ENCODE measurements at regions of chr7 and their contacts with region 1.

Region 1: DNA sequence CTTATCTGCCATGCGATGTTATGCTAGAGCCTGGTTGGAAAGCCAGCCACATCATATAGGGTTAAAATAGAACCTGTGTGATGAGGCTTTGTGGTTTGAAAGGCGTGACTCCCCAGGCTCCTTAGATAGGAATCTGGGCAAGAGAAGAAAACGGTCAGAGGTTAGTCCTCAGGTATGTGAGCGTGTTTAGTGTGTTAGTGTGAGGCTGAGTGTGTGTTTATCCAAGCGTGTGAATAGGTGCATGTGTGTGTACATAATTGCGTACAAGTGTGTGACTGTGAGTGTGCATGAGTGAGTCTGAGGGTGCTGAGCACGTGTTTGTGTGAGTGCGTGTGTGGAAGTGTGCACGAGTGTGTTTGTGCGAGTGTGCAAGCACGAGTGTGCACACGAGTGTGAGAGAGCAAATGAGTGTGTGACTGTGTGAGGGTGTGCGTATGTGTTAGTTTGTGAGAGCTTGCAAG is 79.9 kb downstream of the COL26A1 start:
- DNase-seq: peak; percentile 43 to 70
- H3K4me3 ChIP-seq: no peak overlapping the region
- H3K27ac ChIP-seq: no peak overlapping the region
- H3K4me1 ChIP-seq: peaks cover 12% of the 10 kb centered on the region
- H3K27me3 ChIP-seq: no peaks in the 10 kb centered on the region
- CTCF ChIP-seq: no peak

Region 2: DNA sequence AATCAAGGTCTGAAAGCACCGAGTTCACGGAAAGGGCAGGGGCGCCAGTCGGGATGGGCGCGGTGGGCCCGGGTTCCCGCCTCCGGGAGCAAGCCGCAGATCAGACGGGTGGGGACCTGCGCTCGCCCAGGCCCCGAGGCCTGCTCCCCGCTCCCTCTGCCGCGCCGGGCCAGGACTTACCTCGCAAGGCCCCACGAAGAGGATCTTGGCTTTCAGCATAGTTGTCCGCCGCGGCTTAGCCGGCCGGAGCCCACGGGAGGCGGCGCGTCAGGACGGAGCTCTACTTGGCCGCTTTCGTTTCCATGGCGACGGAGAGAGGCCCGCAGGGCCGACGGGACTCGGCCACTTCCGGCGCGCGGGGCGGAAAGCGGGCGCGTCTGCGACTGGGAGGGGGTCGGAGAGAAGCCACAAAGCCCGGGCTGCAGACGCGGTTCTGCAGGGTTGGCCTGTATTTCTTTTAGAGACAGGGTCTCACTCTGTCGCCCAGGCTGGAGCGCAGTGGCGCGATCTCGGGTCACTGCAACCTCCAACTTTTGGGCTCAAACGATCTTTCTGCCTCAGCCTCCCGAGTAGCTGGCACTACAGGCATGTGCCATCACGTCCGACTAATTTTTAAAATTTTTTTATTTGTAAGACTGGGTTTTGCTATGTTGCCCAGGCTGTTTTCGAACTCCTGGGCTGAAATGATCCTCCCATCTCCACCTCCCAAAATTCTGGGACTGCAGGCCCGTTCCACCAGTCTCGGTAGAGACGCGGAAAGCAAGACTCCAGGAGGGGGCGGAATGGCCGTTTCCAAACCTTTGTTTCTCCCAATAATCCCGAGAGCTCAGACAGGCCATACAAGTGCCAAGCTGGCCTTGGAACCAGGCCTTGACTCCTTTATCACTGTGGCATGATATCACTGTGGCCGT is 120.8 kb before region 1 on chr7 and contains the start of gene IFT22:
- CTCF ChIA-PET with region 1: no interaction called
- POLR2A ChIA-PET with region 1: no interaction called
- intact Hi-C with region 1: loop called (anchors 10 kb)
- DNase-seq: peak; percentile 76 to 89
- H3K4me3 ChIP-seq: peak within 1 kb of the TSS; percentile 85
- H3K27ac ChIP-seq: no peak within 1 kb of the TSS; the same call in 1 of the 2 replicates
- H3K4me1 ChIP-seq: peaks cover 5% of the 10 kb centered on the region; the same call in 1 of the 2 replicates
- H3K27me3 ChIP-seq: peaks cover 10% of the 10 kb centered on the region; the same call in 1 of the 2 replicates
- CTCF ChIP-seq: no peak; the same call in 1 of the 2 replicates
- total RNA-seq, gene IFT22: 47.6 and 53.0 TPM in 2 replicates

Region 3: GRCh38 chr7:101457007-101457755 is 14.6 kb after region 1 on chr7:
- CTCF ChIA-PET with region 1: interaction called, 12 read pairs
- POLR2A ChIA-PET with region 1: no interaction called
- intact Hi-C with region 1: no loop called
- DNase-seq: peak in 1 of 2 experiments; percentile 20
- H3K4me3 ChIP-seq: no peak overlapping the region
- H3K27ac ChIP-seq: no peak overlapping the region
- H3K4me1 ChIP-seq: peaks cover 7% of the 10 kb centered on the region; the same call in 1 of the 2 replicates
- H3K27me3 ChIP-seq: 0 out of 2 replicates have a peak, but pooled peaks cover 3% of the 10 kb centered on the region
- CTCF ChIP-seq: no peak

Region 4: GRCh38 chr7:101507791-101508252 is 65.3 kb after region 1 on chr7:
- CTCF ChIA-PET with region 1: no interaction called
- POLR2A ChIA-PET with region 1: no interaction called
- intact Hi-C with region 1: loop called (anchors 5 kb)
- DNase-seq: peak; percentile 46 to 70
- H3K4me3 ChIP-seq: no peak overlapping the region
- H3K27ac ChIP-seq: no peak overlapping the region
- H3K4me1 ChIP-seq: no peaks in the 10 kb centered on the region
- H3K27me3 ChIP-seq: peaks cover 57% of the 10 kb centered on the region
- CTCF ChIP-seq: peak; percentile 87

Region 5: GRCh38 chr7:102272075-102272917 is 829.7 kb after region 1 on chr7:
- CTCF ChIA-PET with region 1: no interaction called
- POLR2A ChIA-PET with region 1: no interaction called
- intact Hi-C with region 1: loop called (anchors 5 kb)
- DNase-seq: peak in 1 of 2 experiments; percentile 86
- H3K4me3 ChIP-seq: no peak overlapping the region
- H3K27ac ChIP-seq: no peak overlapping the region
- H3K4me1 ChIP-seq: no peaks in the 10 kb centered on the region
- H3K27me3 ChIP-seq: no peaks in the 10 kb centered on the region
- CTCF ChIP-seq: peak; percentile 86

Measured in PC-9 (cell line).